Activated CD4-positive, alpha-beta memory T cell treated with anti-CD3 and anti-CD28 coated beads for 36 hours (primary cell): ENCODE measurements at regions of chr6 and their contacts with region 1.

Region 1: GRCh38 chr6:4018172-4018905 is 60.6 kb downstream of the FAM217A start:
- DNase-seq: peak; percentile 98
- H3K4me3 Mint-ChIP-seq: peak overlapping the region; percentile 90
- H3K27ac Mint-ChIP-seq: peak overlapping the region; percentile 97
- H3K4me1 Mint-ChIP-seq: peaks cover 63% of the 10 kb centered on the region
- H3K27me3 Mint-ChIP-seq: no peaks in the 10 kb centered on the region

Region 2: GRCh38 chr6:3857468-3858456 is 160.6 kb before region 1 on chr6:
- CTCF ChIA-PET with region 1: no interaction called
- POLR2A ChIA-PET with region 1: no interaction called
- intact Hi-C with region 1: no loop called
- DNase-seq: no peak
- H3K4me3 Mint-ChIP-seq: no peak overlapping the region
- H3K27ac Mint-ChIP-seq: no peak overlapping the region
- H3K4me1 Mint-ChIP-seq: no peaks in the 10 kb centered on the region
- H3K27me3 Mint-ChIP-seq: peaks cover 7% of the 10 kb centered on the region

Region 3: GRCh38 chr6:3868544-3868943 is 149.8 kb before region 1 on chr6:
- CTCF ChIA-PET with region 1: no interaction called
- POLR2A ChIA-PET with region 1: no interaction called
- intact Hi-C with region 1: loop called (anchors 2 kb)
- DNase-seq: no peak
- H3K4me3 Mint-ChIP-seq: peak overlapping the region; percentile 24
- H3K27ac Mint-ChIP-seq: peak overlapping the region; percentile 92
- H3K4me1 Mint-ChIP-seq: peaks cover 45% of the 10 kb centered on the region
- H3K27me3 Mint-ChIP-seq: peaks cover 8% of the 10 kb centered on the region

Region 4: GRCh38 chr6:4055420-4056041 is 37.2 kb after region 1 on chr6:
- CTCF ChIA-PET with region 1: interaction called, 3 read pairs
- POLR2A ChIA-PET with region 1: interaction called, 6 read pairs
- intact Hi-C with region 1: loop called (anchors 5 kb)
- DNase-seq: no peak
- H3K4me3 Mint-ChIP-seq: no peak overlapping the region
- H3K27ac Mint-ChIP-seq: no peak overlapping the region
- H3K4me1 Mint-ChIP-seq: peaks cover 30% of the 10 kb centered on the region
- H3K27me3 Mint-ChIP-seq: no peaks in the 10 kb centered on the region

Region 5: DNA sequence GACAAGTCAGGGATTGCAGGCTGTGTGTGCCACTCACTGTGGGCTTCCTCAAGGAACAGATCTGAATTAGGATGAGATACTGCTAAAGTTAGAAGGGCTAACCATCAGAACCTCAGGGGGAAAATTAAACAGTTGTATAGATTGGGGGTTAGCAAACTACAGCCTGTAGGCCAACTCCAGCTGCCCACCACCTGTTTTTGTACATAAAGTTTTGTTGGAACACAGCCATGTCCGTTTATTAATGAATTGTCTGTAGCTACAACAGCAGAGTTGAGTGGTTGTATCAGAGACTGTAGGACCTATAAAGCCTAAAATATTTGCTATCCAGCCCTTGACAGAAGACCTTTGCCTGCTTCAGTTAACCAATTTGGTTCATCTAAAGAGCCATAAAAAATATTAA is 244.2 kb after region 1 on chr6:
- CTCF ChIA-PET with region 1: no interaction called
- POLR2A ChIA-PET with region 1: no interaction called
- intact Hi-C with region 1: no loop called
- DNase-seq: no peak
- H3K4me3 Mint-ChIP-seq: no peak overlapping the region
- H3K27ac Mint-ChIP-seq: no peak overlapping the region
- H3K4me1 Mint-ChIP-seq: no peaks in the 10 kb centered on the region
- H3K27me3 Mint-ChIP-seq: peaks cover 2% of the 10 kb centered on the region